A673 (cell line): ENCODE measurements at regions of chr2 and their contacts with region 1.

Region 1: GRCh38 chr2:104849618-104850141 is 4.2 kb upstream of the POU3F3 start:
- DNase-seq: peak; percentile 73
- H3K4me3 ChIP-seq: no peak overlapping the region
- H3K27ac ChIP-seq: no peak overlapping the region
- H3K4me1 ChIP-seq: peaks cover 9% of the 10 kb centered on the region
- H3K27me3 ChIP-seq: peaks cover 98% of the 10 kb centered on the region
- CTCF ChIP-seq: peak; percentile 88

Region 2: GRCh38 chr2:105081006-105081601 is 231.4 kb after region 1 on chr2:
- CTCF ChIA-PET with region 1: no interaction called
- POLR2A ChIA-PET with region 1: no interaction called
- intact Hi-C with region 1: loop called (anchors 10 kb)
- DNase-seq: peak; percentile 80
- H3K4me3 ChIP-seq: peak overlapping the region; percentile 3
- H3K27ac ChIP-seq: peak overlapping the region; percentile 43
- H3K4me1 ChIP-seq: peaks cover 48% of the 10 kb centered on the region
- H3K27me3 ChIP-seq: no peaks in the 10 kb centered on the region
- CTCF ChIP-seq: no peak